Left colon (tissue), 2 donors: ENCODE measurements at regions of chr18 and their contacts with region 1.

Region 1: GRCh38 chr18:10519999-10520935 is 5.6 kb upstream of the NAPG start:
- DNase-seq: peak; percentile 80 to 86
- ATAC-seq: peak; percentile 95

Region 2: GRCh38 chr18:9971313-9971920 is 548.9 kb before region 1 on chr18:
- intact Hi-C with region 1: loop called (anchors 2 to 10 kb)
- DNase-seq: peak in 1 of 2 donors; percentile 77
- ATAC-seq: peak; percentile 77

Region 3: GRCh38 chr18:10465174-10465939 is 54.9 kb before region 1 on chr18:
- intact Hi-C with region 1: no loop called
- DNase-seq: no peak
- ATAC-seq: no peak